Caco-2 (cell line): ENCODE measurements at regions of chr13 and their contacts with region 1.

Region 1: DNA sequence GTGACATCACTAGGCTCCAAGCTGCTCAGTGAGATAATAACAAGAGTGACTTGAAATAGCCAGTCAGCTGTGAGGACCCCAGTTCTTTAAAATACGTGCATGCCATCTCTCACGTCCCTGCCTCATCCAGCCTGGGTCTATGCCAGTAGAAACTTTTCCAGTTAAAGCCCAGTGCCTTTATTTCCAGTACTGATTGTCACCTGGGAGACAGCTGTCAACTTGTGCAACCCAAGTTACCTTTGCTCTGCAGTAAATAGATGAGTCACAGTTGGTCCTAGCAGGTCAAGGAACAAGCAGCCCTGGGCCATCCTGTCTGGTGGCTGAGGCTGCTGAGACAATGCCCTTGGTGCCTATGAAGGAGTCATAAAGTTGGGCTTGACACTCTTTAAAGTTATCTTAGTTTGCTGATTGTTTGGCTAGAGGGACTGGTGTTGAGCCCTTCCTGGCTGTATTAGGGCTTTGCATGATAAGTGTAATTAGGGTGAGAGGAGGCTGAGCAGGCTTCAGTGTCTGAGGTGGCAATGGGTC is 228.7 kb downstream of the LACC1 start:
- DNase-seq: peak; percentile 89 to 91
- H3K4me3 ChIP-seq: no peak overlapping the region
- H3K4me3 Mint-ChIP-seq: peak overlapping the region; percentile 8
- H3K27ac Mint-ChIP-seq: peak overlapping the region; percentile 72
- H3K4me1 ChIP-seq: peaks cover 23% of the 10 kb centered on the region
- H3K4me1 Mint-ChIP-seq: peaks cover 30% of the 10 kb centered on the region
- H3K27me3 ChIP-seq: no peaks in the 10 kb centered on the region
- H3K27me3 Mint-ChIP-seq: no peaks in the 10 kb centered on the region
- CTCF ChIP-seq: no peak

Region 2: GRCh38 chr13:44075113-44075512 is 33.3 kb before region 1 on chr13:
- CTCF ChIA-PET with region 1: no interaction called
- POLR2A ChIA-PET with region 1: no interaction called
- intact Hi-C with region 1: loop called (anchors 2 kb)
- DNase-seq: no peak
- H3K4me3 ChIP-seq: no peak overlapping the region
- H3K4me3 Mint-ChIP-seq: no peak overlapping the region
- H3K27ac Mint-ChIP-seq: no peak overlapping the region
- H3K4me1 ChIP-seq: peaks cover 17% of the 10 kb centered on the region
- H3K4me1 Mint-ChIP-seq: peaks cover 23% of the 10 kb centered on the region
- H3K27me3 ChIP-seq: no peaks in the 10 kb centered on the region
- H3K27me3 Mint-ChIP-seq: no peaks in the 10 kb centered on the region
- CTCF ChIP-seq: no peak

Region 3: GRCh38 chr13:44174769-44175425 is 66.5 kb after region 1 on chr13:
- CTCF ChIA-PET with region 1: no interaction called
- POLR2A ChIA-PET with region 1: no interaction called
- intact Hi-C with region 1: loop called (anchors 2 kb)
- DNase-seq: peak; percentile 61 to 86
- H3K4me3 ChIP-seq: no peak overlapping the region
- H3K4me3 Mint-ChIP-seq: peak overlapping the region; percentile 16
- H3K27ac Mint-ChIP-seq: peak overlapping the region; percentile 93
- H3K4me1 ChIP-seq: peaks cover 15% of the 10 kb centered on the region
- H3K4me1 Mint-ChIP-seq: peaks cover 12% of the 10 kb centered on the region
- H3K27me3 ChIP-seq: no peaks in the 10 kb centered on the region
- H3K27me3 Mint-ChIP-seq: no peaks in the 10 kb centered on the region
- CTCF ChIP-seq: no peak

Region 4: DNA sequence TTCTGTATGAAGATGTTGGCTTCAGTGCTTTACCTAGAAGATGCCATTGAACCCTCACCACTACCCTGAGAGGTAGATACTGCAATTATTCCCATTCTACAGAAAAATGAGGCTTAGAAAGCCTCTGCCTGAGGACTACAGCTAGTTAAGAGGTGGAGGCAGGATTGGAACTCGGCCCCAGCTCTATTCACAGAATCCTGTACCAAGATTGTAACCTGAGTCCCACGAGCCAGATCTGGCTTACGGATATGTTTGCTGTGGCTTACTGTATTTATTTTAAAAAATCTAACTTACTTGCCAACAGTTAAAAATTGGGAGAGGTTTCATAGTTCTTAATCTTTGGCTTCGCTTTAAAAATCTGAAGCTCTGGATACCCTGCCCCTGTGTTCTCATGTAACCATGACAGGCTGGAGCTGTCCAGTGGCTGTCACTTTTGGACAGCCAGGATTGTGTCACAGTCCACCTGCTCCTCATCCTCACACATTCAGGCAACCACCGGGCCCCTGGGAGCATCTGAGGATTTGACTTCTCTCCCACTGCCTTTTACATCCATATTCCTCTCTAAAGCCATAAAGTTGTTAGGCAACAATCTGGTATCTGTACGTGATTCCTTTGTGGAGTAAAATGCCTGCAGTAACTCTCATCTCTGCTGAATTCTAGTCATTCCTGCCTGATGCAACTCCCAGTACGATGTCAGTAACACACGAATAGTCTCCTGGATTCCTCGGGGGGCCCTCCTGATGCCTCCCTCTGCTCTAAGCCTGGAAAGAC is 104.4 kb after region 1 on chr13:
- CTCF ChIA-PET with region 1: no interaction called
- POLR2A ChIA-PET with region 1: no interaction called
- intact Hi-C with region 1: loop called (anchors 1 kb)
- DNase-seq: peak; percentile 85 to 90
- H3K4me3 ChIP-seq: no peak overlapping the region
- H3K4me3 Mint-ChIP-seq: peak overlapping the region; percentile 47
- H3K27ac Mint-ChIP-seq: peak overlapping the region; percentile 97
- H3K4me1 ChIP-seq: peaks cover 18% of the 10 kb centered on the region
- H3K4me1 Mint-ChIP-seq: peaks cover 36% of the 10 kb centered on the region
- H3K27me3 ChIP-seq: no peaks in the 10 kb centered on the region
- H3K27me3 Mint-ChIP-seq: no peaks in the 10 kb centered on the region
- CTCF ChIP-seq: no peak